ENCODE measurements at regions of chr17 and their contacts with region 1.

Region 1: GRCh38 chr17:73429440-73430164 is 117.8 kb upstream of the CDC42EP4 start:
- DNase-seq: peak; percentile 77
- H3K4me3 Mint-ChIP-seq: no peak overlapping the region
- H3K27ac Mint-ChIP-seq: no peak overlapping the region
- H3K4me1 Mint-ChIP-seq: no peaks in the 10 kb centered on the region
- H3K27me3 Mint-ChIP-seq: no peaks in the 10 kb centered on the region
- CTCF ChIP-seq: peak; percentile 95

Region 2: DNA sequence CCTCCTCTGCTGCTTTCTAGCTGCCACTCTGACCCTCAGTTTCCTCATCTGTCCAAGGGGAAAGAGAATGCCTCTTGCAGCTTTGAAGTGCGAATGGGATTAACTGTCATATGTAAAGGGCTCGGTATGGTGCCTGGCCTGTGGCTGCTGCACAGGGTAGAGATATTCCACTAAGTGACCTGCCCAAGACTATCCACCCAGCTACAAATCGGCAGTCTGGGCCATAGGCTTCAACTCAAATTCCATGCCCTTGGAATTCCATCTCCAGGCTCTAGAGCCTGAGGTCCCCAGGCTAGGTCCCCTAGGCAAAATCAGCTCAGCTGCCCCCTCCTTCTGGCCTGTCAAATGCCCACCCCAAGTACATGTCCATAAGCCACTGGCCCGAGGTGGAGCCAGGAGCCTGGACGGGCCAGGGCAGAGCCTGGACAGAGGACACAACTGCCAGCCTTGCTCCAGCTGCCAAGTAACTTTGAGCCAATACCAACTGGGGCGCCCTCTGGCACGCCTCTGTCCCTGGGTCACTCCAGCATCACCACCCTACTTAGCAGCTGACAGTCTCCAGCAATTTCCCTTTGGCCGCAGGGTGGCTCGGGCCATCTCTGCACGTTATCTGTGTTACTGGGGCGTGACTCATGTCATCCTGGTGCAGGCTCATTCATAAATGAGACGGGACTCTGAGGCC is 157.5 kb after region 1 on chr17:
- CTCF ChIA-PET with region 1: no interaction called
- POLR2A ChIA-PET with region 1: no interaction called
- intact Hi-C with region 1: loop called (anchors 10 kb)
- DNase-seq: peak; percentile 29
- H3K4me3 Mint-ChIP-seq: no peak overlapping the region
- H3K27ac Mint-ChIP-seq: no peak overlapping the region
- H3K4me1 Mint-ChIP-seq: no peaks in the 10 kb centered on the region
- H3K27me3 Mint-ChIP-seq: peaks cover 40% of the 10 kb centered on the region
- CTCF ChIP-seq: no peak

Region 3: DNA sequence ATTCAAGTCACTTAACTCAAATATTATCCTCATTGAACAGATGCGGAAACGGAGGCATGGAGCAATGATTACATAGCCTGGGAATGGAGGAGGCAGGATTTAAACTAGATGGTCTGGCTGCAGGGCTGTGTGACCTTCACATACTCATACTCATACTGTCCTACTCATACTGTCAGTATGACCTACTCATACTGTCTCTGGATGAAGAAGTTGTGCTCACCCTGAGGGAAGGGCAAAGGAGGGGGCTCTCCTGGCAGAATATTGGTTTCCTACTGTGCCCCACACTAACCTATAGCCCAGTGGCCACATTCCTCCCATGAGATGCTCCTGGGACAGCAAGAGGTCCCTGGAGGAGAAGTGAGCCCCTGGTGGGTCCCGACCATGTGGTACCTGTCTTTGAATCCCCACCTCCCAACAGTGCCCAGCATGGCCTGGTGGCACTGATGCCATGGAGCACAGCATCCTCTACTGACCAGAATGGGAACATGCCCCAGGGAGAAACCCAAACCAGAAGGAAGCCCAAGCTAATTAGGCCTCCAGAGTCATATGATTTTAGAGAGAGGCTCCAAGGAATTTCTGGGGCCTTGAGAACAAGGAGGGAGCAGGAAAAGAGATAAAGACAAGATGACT is 411.9 kb after region 1 on chr17:
- CTCF ChIA-PET with region 1: interaction called, 6 read pairs
- POLR2A ChIA-PET with region 1: interaction called, 3 read pairs
- intact Hi-C with region 1: loop called (anchors 1 kb)
- DNase-seq: peak; percentile 30
- H3K4me3 Mint-ChIP-seq: no peak overlapping the region
- H3K27ac Mint-ChIP-seq: no peak overlapping the region
- H3K4me1 Mint-ChIP-seq: no peaks in the 10 kb centered on the region
- H3K27me3 Mint-ChIP-seq: peaks cover 11% of the 10 kb centered on the region
- CTCF ChIP-seq: peak; percentile 83

Region 4: DNA sequence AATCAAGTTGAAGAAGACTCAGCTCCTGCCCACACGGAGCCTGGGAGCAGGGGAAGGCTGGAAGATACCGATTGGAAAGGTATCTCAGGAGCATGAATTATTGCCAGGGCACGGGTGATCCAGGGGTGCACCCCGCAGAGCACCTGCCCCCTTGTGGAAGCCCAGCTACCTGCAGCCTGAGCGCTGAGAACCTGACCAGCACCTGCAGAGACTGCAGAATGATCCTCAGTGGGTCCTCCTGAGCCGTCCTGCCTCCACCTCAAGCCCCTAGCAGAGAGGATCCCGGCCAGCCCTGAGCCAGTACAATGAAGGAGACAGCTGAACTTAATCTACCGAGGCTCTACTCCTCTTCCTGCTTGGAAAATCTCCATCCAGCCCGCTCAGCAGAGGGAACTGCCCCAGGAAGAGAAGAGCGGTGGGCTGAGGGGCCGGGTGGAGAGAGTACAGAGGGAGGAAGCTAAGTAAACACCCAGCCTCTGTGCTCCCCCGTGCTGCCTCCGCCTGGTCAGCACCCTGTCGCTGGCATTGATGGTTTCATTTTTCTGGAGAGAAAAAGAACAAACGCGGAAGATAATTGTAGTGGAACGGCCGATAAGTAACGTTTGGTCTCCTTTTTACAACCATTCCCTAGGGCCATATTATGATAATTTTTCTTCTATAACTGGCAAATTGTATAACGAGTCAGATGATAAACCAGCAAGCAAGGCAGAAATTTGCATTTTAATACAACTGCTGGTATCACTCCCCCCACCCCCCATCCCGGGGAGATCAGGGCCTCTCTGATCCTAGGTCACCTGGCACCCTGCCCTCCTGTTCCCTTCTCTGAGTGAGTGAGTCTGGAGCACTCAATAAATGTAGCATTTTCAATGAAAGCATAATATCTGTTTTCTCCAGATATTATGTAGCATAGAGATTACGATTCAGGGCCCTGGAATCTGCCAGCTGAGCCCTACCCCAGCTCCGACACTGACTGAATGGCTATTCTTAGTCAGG is 569.3 kb after region 1 on chr17:
- CTCF ChIA-PET with region 1: interaction called, 11 read pairs
- POLR2A ChIA-PET with region 1: no interaction called
- intact Hi-C with region 1: loop called (anchors 1 kb)
- DNase-seq: peak; percentile 51
- H3K4me3 Mint-ChIP-seq: no peak overlapping the region
- H3K27ac Mint-ChIP-seq: no peak overlapping the region
- H3K4me1 Mint-ChIP-seq: no peaks in the 10 kb centered on the region
- H3K27me3 Mint-ChIP-seq: peaks cover 37% of the 10 kb centered on the region
- CTCF ChIP-seq: peak; percentile 85

Region 5: GRCh38 chr17:74182041-74182723 is 752.6 kb after region 1 on chr17:
- CTCF ChIA-PET with region 1: interaction called, 57 read pairs
- POLR2A ChIA-PET with region 1: no interaction called
- intact Hi-C with region 1: no loop called
- DNase-seq: no peak
- H3K4me3 Mint-ChIP-seq: no peak overlapping the region
- H3K27ac Mint-ChIP-seq: no peak overlapping the region
- H3K4me1 Mint-ChIP-seq: no peaks in the 10 kb centered on the region
- H3K27me3 Mint-ChIP-seq: peaks cover 57% of the 10 kb centered on the region
- CTCF ChIP-seq: no peak

Measured in MCF 10A (cell line).